ENCODE measurements at regions of chr14 and their contacts with region 1.

Region 1: GRCh38 chr14:44912041-44912869 is 49.5 kb downstream of the KLHL28 start:
- DNase-seq: no peak
- H3K4me3 ChIP-seq: peak overlapping the region; percentile 37
- H3K27me3 ChIP-seq: no peaks in the 10 kb centered on the region
- CTCF ChIP-seq: no peak

Region 2: GRCh38 chr14:44898551-44898950 is 13.7 kb before region 1 on chr14:
- CTCF ChIA-PET with region 1: interaction called, 16 read pairs
- POLR2A ChIA-PET with region 1: no interaction called
- DNase-seq: no peak
- H3K4me3 ChIP-seq: peak overlapping the region; percentile 84
- H3K27me3 ChIP-seq: no peaks in the 10 kb centered on the region
- CTCF ChIP-seq: no peak

Region 3: GRCh38 chr14:44928793-44929192 is 16.5 kb after region 1 on chr14:
- CTCF ChIA-PET with region 1: interaction called, 13 read pairs
- POLR2A ChIA-PET with region 1: no interaction called
- DNase-seq: no peak
- H3K4me3 ChIP-seq: no peak overlapping the region
- H3K27me3 ChIP-seq: no peaks in the 10 kb centered on the region
- CTCF ChIP-seq: no peak

Region 4: GRCh38 chr14:44961604-44962333 is 49.5 kb after region 1 on chr14 and contains the starts of genes KLHL28 and TOGARAM1:
- CTCF ChIA-PET with region 1: interaction called, 28 read pairs
- POLR2A ChIA-PET with region 1: no interaction called
- DNase-seq: peak; percentile 100
- H3K4me3 ChIP-seq: peak within 1 kb of the TSS; percentile 71
- H3K27me3 ChIP-seq: no peaks in the 10 kb centered on the region
- CTCF ChIP-seq: no peak
- polyA plus RNA-seq, gene KLHL28: 3.0 and 5.7 TPM in 2 replicates
- polyA plus RNA-seq, gene TOGARAM1: 5.4 and 10.3 TPM in 2 replicates

Region 5: DNA sequence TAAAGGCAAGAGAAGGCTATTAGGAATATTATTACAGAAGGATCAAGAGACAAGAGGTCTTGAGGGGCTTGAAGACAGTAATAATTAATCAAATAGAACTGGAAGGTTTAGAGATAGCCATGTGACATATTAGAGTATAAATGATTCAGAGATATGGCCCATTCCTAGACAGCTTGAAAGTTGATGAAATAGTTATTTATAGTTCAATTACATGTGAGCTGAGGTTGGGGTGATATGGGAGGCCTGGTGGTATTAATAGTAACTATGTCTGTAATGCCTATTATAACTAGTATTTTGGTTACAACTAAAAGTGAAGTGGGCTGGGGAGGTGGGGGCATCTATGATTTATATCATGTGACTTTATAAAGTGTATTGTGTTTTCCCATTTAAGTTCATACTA is 354.8 kb after region 1 on chr14:
- CTCF ChIA-PET with region 1: interaction called, 112 read pairs
- POLR2A ChIA-PET with region 1: no interaction called
- DNase-seq: no peak
- H3K4me3 ChIP-seq: no peak overlapping the region
- H3K27me3 ChIP-seq: no peaks in the 10 kb centered on the region
- CTCF ChIP-seq: no peak